AG04450 (cell line): ENCODE measurements at regions of chr6 and their contacts with region 1.

Region 1: DNA sequence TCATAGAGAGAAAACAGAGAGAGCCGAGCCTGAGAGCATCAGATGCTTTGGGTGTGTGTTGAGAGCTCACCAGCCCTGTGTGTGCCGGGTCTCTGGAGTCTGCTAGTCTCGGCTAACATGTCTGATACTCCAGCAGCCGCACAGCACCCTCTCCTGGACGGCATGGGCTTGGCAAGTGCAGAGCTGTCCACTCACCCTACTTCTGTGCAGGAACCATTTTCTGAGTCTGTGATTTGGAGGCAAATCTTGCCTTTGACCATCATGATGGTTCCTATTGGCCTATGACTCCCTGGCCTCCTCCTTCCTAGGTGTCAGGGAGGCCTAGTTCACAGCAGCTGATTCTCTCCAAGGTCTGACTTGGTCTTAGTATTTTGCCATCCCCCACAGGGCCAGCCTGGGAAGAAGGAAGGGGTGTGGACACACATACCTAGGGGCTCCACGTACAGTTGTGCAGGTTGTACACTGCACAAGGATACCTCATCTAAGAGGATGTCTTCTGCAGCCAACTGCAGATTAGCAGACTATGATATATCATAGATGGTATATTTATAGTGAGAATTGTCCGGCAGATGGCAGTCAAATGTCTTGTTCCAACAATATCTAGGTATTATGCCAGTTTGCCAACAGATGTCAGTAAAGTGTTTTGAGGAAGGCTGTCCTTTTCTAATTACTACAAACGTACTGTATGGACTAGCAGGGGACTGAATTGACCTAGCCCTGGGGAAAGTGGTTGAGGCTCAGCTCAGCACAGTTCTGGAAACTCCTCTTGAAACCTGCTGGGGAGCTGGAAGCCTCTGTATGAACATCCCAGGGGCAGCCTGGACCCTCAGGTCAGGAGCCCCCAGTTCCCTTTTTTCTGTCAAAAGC is 13.0 kb downstream of the FGD2 start:
- DNase-seq: peak; percentile 82
- H3K4me3 ChIP-seq: no peak overlapping the region
- H3K27ac ChIP-seq: no peak overlapping the region
- H3K27me3 ChIP-seq: no peaks in the 10 kb centered on the region
- CTCF ChIP-seq: peak; percentile 95

Region 2: DNA sequence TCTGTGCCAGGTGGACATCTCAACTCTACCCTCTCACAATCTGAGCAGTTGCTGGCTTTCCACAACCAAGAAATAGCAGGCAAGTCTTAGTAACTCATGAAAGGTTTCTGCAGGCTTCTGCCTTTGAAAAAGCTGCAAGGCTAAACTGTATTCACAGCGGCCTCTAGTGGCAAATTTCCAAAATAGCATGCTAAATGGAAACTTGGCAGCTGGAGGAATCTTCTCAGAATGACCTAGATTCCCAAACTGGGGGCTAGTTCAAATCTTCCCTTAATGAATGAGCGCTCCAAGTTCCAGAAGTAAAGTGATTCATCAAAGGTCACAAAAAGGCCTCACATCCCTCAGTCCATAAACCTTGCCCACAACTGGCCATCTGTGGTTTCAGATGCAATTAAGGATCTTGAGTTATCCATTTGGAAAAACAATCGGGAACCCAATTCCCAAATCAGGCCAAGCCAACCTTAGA is 167.2 kb before region 1 on chr6:
- CTCF ChIA-PET with region 1: interaction called, 11 read pairs
- POLR2A ChIA-PET with region 1: no interaction called
- DNase-seq: peak; percentile 21
- H3K4me3 ChIP-seq: no peak overlapping the region
- H3K27ac ChIP-seq: peak overlapping the region; percentile 31
- H3K27me3 ChIP-seq: no peaks in the 10 kb centered on the region
- CTCF ChIP-seq: peak; percentile 72

Region 3: GRCh38 chr6:36904114-36904513 is 114.3 kb before region 1 on chr6:
- CTCF ChIA-PET with region 1: interaction called, 13 read pairs
- POLR2A ChIA-PET with region 1: no interaction called
- DNase-seq: no peak
- H3K4me3 ChIP-seq: no peak overlapping the region
- H3K27ac ChIP-seq: peak overlapping the region; percentile 12
- H3K27me3 ChIP-seq: no peaks in the 10 kb centered on the region
- CTCF ChIP-seq: no peak

Region 4: GRCh38 chr6:37007340-37008043 is 10.9 kb before region 1 on chr6:
- CTCF ChIA-PET with region 1: interaction called, 18 read pairs
- POLR2A ChIA-PET with region 1: no interaction called
- DNase-seq: no peak
- H3K4me3 ChIP-seq: no peak overlapping the region
- H3K27ac ChIP-seq: no peak overlapping the region
- H3K27me3 ChIP-seq: peaks cover 4% of the 10 kb centered on the region
- CTCF ChIP-seq: no peak

Region 5: DNA sequence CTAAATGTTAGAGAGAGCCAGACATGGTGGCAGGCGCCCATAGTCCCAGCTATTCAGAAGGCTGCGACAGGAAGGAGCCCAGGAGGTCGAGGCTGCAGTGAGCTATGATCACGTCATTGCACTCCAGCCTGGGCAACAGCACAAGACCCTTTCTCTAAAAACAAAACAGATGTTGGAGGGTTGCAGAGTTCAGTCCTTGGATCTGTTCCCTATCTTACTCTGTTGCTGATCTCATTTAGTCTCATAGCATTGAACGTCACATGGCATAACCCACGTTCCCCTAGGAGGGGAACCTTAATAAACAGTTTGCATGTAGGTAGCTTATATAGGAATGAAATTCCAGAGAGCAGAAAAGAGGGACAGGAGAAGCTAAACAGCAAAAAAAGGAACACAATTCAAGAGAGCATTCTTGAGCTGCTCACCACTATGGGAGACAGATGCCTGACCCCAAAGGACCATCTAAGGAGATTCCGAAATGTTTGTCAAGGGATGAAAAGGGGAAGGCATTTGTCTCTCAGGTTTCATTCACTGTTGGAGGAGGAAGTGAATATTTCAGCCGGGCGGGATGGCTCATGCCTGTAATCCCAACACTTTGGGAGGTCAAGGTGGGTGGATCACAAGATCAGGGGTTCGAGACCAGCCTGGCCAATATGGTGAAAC is 96.9 kb after region 1 on chr6:
- CTCF ChIA-PET with region 1: no interaction called
- POLR2A ChIA-PET with region 1: no interaction called
- DNase-seq: no peak
- H3K4me3 ChIP-seq: no peak overlapping the region
- H3K27ac ChIP-seq: peak overlapping the region; percentile 21
- H3K27me3 ChIP-seq: no peaks in the 10 kb centered on the region
- CTCF ChIP-seq: no peak

Region 6: GRCh38 chr6:37169496-37170272 is 151.3 kb after region 1 on chr6 and contains the start of gene PIM1:
- CTCF ChIA-PET with region 1: interaction called, 92 read pairs
- POLR2A ChIA-PET with region 1: interaction called, 4 read pairs
- DNase-seq: peak; percentile 95
- H3K4me3 ChIP-seq: peak within 1 kb of the TSS; percentile 95
- H3K27ac ChIP-seq: peak within 1 kb of the TSS; percentile 99
- H3K27me3 ChIP-seq: no peaks in the 10 kb centered on the region
- CTCF ChIP-seq: no peak
- polyA plus RNA-seq, gene PIM1: 35.3 and 37.5 TPM in 2 replicates

Region 7: DNA sequence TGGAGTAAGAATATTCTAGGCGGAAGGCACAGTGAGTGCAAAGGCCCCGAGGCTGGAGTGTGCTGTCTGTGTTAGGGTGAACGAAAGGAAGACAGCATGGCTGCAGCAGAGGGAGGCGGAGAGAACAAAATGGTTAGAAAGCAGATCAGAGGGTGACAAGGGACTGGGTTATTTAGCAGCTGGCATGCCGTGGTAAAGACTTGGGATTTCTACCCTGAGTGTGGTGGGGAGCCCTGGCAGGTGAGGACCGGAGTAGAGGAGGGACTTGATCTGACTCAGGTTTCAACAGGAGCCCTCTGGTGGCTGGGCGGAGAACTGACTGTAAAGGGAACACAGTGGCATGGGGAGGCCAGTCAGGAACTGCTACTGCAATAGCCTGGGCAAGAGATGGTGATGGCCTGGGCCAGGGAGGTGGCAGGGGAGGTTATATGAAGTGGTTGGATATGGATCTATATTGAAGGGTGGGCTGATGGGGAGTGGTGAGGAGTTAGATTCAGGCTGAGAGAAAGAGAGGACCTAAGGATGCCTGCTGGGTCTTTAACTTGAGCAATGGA is 189.5 kb after region 1 on chr6:
- CTCF ChIA-PET with region 1: interaction called, 597 read pairs
- POLR2A ChIA-PET with region 1: interaction called, 8 read pairs
- DNase-seq: peak; percentile 47
- H3K4me3 ChIP-seq: no peak overlapping the region
- H3K27ac ChIP-seq: no peak overlapping the region
- H3K27me3 ChIP-seq: no peaks in the 10 kb centered on the region
- CTCF ChIP-seq: peak; percentile 87

Region 8: GRCh38 chr6:37324131-37325033 is 306.0 kb after region 1 on chr6:
- CTCF ChIA-PET with region 1: no interaction called
- POLR2A ChIA-PET with region 1: no interaction called
- DNase-seq: no peak
- H3K4me3 ChIP-seq: no peak overlapping the region
- H3K27ac ChIP-seq: peak overlapping the region; percentile 21
- H3K27me3 ChIP-seq: no peaks in the 10 kb centered on the region
- CTCF ChIP-seq: no peak